ENCODE measurements at regions of chr7 and their contacts with region 1.

Region 1: GRCh38 chr7:24595671-24596418 is 22.6 kb downstream of the PALS2 start:
- DNase-seq: no peak
- ATAC-seq: no peak
- H3K4me3 ChIP-seq: no peak overlapping the region
- H3K27ac ChIP-seq: no peak overlapping the region
- H3K4me1 ChIP-seq: peaks cover 19% of the 10 kb centered on the region
- H3K27me3 ChIP-seq: no peaks in the 10 kb centered on the region
- CTCF ChIP-seq: no peak

Region 2: GRCh38 chr7:24637706-24638105 is 41.9 kb after region 1 on chr7:
- intact Hi-C with region 1: loop called in 1 of 2 experiments (anchors 5 kb)
- DNase-seq: no peak
- ATAC-seq: peak in 1 of 4 donors; percentile 50
- H3K4me3 ChIP-seq: no peak overlapping the region
- H3K27ac ChIP-seq: no peak overlapping the region
- H3K4me1 ChIP-seq: peaks cover 8% of the 10 kb centered on the region
- H3K27me3 ChIP-seq: no peaks in the 10 kb centered on the region
- CTCF ChIP-seq: no peak

Measured in psoas muscle (tissue), 8 donors.